ENCODE measurements at regions of chr13 and their contacts with region 1.

Region 1: DNA sequence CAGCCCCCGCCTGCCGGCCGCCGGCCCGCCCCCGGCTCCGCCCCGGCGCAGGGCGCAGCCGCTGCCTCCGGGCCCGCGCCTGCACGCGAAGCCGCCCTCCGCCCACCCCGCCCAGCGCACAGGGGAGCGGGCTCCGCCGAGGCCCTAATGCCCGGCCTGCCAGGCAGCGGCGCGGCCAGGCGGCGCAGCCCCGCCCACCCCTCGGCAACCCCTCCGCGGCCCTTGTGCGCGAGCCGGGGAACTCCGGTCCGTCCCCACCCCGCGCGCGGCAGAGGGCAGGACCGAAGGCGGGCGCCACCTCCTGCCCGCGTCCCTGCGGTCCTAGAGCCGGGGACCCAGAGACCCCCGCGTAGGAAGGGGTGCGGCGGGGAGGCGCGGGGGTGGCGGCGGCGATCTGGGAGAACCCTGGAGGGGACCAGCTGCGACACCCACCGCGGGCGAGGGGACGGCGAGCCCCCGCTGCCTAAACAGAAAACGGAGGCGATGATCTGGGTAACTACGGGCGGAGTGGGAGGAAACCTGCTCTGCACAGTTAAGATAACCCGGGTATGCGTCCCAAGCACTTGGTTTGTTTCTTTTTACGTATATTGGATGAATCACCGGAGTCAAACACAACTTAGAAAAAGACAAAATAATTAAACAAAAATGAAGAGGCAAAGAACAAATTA is 350 bp upstream of the USP12 start:
- DNase-seq: peak; percentile 97 to 98
- ATAC-seq: peak; percentile 96
- H3K4me3 ChIP-seq: peak overlapping the region; percentile 93 to 99
- H3K27ac ChIP-seq: peak overlapping the region; percentile 58 to 97
- H3K4me1 ChIP-seq: peaks cover 6% of the 10 kb centered on the region in 2 donors
- H3K27me3 ChIP-seq: no peaks in the 10 kb centered on the region

Region 2: DNA sequence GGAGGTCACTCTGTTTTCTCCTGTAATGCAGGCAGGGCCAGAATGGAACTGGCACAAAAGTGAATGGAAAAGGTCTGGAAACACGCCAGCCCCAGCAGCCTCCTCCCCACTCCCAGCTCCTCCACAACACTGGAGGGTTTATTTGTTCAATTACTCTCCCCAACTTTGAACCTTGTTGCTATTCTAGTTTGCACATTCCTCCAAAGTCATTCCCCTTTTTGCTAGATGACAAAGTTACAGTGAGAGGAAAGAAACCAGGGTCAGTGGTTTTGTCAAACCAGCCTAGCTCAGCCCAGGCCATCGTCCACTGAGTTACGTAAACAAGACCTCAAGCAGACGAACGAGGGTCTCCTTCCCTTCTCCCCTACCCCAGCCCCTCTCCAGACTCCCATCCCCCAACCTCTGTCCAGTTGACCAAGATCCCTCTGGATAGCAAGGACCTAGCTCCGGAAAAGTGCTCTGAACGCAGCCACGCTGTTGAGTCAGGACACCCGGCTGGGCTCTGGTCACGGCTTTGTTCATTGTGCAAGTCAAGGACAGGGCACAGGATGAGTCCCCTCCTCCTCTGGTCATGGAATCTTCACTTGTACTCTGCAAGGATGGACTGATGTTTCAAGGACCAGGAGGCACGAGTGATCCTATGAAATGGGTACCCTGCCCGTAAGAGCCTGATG is 180.3 kb before region 1 on chr13:
- intact Hi-C with region 1: loop called in 1 of 2 experiments (anchors 5 kb)
- DNase-seq: peak in 1 of 2 donors; percentile 83
- ATAC-seq: no peak
- H3K4me3 ChIP-seq: no peak overlapping the region
- H3K27ac ChIP-seq: no peak overlapping the region
- H3K4me1 ChIP-seq: no peaks in the 10 kb centered on the region
- H3K27me3 ChIP-seq: no peaks in the 10 kb centered on the region

Region 3: GRCh38 chr13:27053902-27054595 is 117.9 kb before region 1 on chr13:
- intact Hi-C with region 1: no loop called
- DNase-seq: no peak
- ATAC-seq: no peak
- H3K4me3 ChIP-seq: no peak overlapping the region
- H3K27ac ChIP-seq: no peak overlapping the region
- H3K4me1 ChIP-seq: no peaks in the 10 kb centered on the region
- H3K27me3 ChIP-seq: no peaks in the 10 kb centered on the region

Region 4: DNA sequence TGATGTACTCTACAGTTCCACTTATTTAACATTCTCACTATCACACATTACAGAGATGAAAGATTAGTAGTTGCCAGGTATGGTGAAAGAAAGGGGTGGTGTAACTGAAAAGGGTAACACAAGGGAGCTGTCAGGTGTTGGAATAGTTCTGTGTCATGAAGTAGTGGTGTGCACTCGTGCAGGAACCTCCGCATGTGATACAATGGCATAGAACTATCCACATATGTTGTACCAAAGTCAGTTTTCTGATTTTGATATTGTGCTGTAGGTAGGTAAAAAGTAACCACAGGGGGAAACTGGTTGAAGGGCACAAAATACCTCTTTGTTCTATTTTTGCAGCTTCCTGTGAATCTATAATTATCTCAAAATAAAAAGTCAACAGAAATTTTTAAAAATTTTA is 55.0 kb after region 1 on chr13:
- intact Hi-C with region 1: no loop called
- DNase-seq: no peak
- ATAC-seq: no peak
- H3K4me3 ChIP-seq: no peak overlapping the region
- H3K27ac ChIP-seq: no peak overlapping the region
- H3K4me1 ChIP-seq: no peaks in the 10 kb centered on the region
- H3K27me3 ChIP-seq: peaks cover 0 to 2% of the 10 kb centered on the region in 2 donors

Region 5: DNA sequence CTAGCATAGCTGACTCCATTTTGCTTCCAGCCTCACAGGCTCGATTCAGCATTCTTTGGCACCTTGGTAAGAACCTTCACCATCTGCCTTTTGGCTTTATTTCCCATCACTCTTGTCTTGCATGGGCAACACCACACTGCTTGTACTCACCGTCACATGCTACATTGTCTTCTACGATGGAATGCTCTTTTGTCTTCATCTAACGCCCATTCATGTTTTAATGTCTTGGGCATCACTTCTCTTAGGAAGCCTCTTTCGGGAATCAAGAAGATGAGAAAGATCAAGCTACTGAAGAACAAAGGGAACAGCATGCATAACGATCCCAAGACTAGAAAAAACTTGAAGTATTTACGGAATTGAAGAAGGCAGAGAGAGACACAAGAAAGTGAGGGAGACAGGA is 73.6 kb after region 1 on chr13:
- intact Hi-C with region 1: loop called (anchors 5 kb)
- DNase-seq: no peak
- ATAC-seq: no peak
- H3K4me3 ChIP-seq: no peak overlapping the region
- H3K27ac ChIP-seq: no peak overlapping the region
- H3K4me1 ChIP-seq: peaks cover 0 to 6% of the 10 kb centered on the region in 2 donors
- H3K27me3 ChIP-seq: no peaks in the 10 kb centered on the region

Region 6: DNA sequence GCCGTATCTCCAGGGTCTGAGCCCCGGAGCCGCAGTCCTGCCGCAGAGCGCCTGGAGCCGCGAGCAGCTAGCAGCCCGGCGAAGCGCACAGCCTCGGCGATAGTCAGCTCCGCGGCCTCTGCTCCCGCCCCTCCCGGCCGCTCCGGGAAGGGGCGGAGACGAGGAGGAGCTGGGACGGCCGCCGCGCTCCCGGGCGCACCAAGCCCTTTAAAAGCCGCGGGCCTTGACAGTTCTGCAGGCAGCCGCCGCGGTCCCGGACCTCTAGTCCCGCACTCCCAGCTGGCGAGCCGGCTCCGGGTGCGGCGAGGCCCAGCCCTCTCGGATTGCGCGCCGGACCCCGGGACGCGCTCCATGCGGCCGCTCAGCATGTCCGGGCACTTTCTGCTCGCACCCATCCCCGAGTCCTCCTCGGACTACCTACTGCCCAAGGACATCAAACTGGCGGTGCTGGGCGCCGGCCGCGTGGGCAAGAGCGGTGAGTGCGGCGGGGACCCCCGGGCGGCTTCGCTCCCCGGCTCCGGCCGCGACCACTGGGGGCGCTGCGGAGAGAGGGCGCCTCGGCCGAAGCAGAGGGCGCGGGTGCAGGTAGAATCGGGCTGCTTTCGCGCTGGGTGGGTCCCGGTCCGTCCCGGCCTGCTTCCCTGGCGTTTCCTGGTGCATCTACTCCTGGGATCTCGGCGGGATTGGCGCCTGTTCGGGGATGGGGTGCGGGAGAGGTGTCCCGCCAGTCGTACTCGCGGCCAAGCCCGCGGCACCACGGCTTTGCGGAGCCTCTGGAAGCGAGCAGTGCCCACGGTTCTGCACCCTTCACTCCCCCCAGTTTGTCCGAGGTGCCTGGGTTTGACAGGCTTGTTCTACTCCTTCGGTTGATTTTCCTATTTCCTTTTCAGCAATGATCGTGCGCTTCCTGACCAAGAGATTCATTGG is 98.9 kb after region 1 on chr13 and contains the start of gene RASL11A:
- intact Hi-C with region 1: loop called (anchors 5 kb)
- DNase-seq: peak; percentile 93 to 96
- ATAC-seq: peak; percentile 96
- H3K4me3 ChIP-seq: peak within 1 kb of the TSS; percentile 65 to 85
- H3K27ac ChIP-seq: peak within 1 kb of the TSS; percentile 50 to 87
- H3K4me1 ChIP-seq: no peaks in the 10 kb centered on the region
- H3K27me3 ChIP-seq: no peaks in the 10 kb centered on the region
- total RNA-seq, gene RASL11A: 40.5 to 58.2 TPM

Region 7: GRCh38 chr13:27362064-27362883 is 190.3 kb after region 1 on chr13:
- intact Hi-C with region 1: loop called (anchors 5 to 10 kb)
- DNase-seq: peak; percentile 90 to 96
- ATAC-seq: peak; percentile 95
- H3K4me3 ChIP-seq: peak overlapping the region; percentile 20 to 27
- H3K27ac ChIP-seq: no peak overlapping the region
- H3K4me1 ChIP-seq: no peaks in the 10 kb centered on the region
- H3K27me3 ChIP-seq: no peaks in the 10 kb centered on the region